Dendritic cell treated with granulocyte-macrophage colony-stimulating factor and Interleukin-4, amounts not matched to agents 40 ng/mL and 50 ng/mL, for 4 days (primary cell): ENCODE measurements at regions of chr4 and their contacts with region 1.

Region 1: DNA sequence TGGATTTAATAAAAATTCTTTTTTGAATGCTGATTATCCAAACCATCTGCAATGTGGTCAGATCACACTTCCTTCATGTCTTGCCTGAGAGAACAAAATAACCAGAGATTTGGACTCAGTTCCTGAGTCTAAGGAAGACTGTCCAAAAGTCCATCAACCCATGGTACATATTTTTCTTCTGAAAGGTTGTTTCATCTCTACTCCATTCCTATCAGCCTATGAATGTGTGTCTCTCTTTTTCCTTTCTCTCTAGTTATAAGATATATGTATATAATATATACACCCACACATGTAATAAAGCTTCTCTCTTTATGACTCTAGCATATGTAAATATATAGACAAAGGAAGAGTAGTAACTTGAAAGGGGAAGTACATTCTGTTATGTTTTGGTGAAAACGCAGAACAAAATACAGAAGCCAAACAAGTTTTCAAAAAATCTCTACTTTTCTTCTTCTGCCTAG is 226.9 kb downstream of the ARHGAP24 start:
- H3K4me3 Mint-ChIP-seq: no peak overlapping the region
- H3K27ac Mint-ChIP-seq: peak overlapping the region; percentile 60
- H3K4me1 Mint-ChIP-seq: peaks cover 53% of the 10 kb centered on the region
- H3K27me3 Mint-ChIP-seq: no peaks in the 10 kb centered on the region

Region 2: GRCh38 chr4:85681221-85681657 is 20.7 kb before region 1 on chr4:
- intact Hi-C with region 1: loop called (anchors 2 kb)
- H3K4me3 Mint-ChIP-seq: no peak overlapping the region
- H3K27ac Mint-ChIP-seq: peak overlapping the region; percentile 70
- H3K4me1 Mint-ChIP-seq: peaks cover 26% of the 10 kb centered on the region
- H3K27me3 Mint-ChIP-seq: no peaks in the 10 kb centered on the region

Region 3: GRCh38 chr4:85741921-85742591 is 40.2 kb after region 1 on chr4:
- intact Hi-C with region 1: loop called (anchors 5 kb)
- H3K4me3 Mint-ChIP-seq: no peak overlapping the region
- H3K27ac Mint-ChIP-seq: peak overlapping the region; percentile 80
- H3K4me1 Mint-ChIP-seq: peaks cover 56% of the 10 kb centered on the region
- H3K27me3 Mint-ChIP-seq: no peaks in the 10 kb centered on the region

Region 4: DNA sequence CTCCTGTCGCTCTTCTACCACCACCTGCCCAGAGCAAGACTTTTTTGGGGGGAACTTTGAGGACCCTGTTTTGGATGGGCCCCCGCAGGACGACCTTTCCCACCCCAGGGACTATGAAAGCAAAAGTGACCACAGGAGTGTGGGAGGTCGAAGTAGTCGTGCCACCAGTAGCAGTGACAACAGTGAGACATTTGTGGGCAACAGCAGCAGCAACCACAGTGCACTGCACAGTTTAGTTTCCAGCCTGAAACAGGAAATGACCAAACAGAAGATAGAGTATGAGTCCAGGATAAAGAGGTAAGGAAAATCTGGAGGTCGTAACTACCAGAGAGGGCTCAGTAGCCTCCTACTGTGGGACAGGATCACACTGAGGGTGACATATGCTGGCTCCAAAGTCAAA is 293.5 kb after region 1 on chr4:
- intact Hi-C with region 1: no loop called
- H3K4me3 Mint-ChIP-seq: no peak overlapping the region
- H3K27ac Mint-ChIP-seq: no peak overlapping the region
- H3K4me1 Mint-ChIP-seq: no peaks in the 10 kb centered on the region
- H3K27me3 Mint-ChIP-seq: no peaks in the 10 kb centered on the region

Region 5: DNA sequence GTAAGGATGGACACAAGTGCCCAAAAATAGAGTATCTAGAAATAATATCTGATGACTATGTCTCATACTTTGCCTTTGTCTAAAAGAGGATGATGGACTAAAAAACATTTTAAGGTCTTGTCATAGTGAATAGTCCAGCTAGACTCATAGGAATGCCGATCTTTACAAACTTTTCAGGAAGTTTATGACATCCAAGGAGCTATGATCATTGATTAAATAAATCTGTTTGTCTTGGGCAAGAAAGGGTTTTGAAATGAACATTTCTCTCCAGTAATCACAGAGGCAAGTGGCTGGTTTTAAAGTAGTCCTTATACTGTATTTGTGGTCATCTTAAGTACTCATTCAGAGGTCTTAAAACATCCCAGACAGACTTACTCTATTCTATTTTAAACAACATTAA is 548.1 kb after region 1 on chr4:
- intact Hi-C with region 1: no loop called
- H3K4me3 Mint-ChIP-seq: no peak overlapping the region
- H3K27ac Mint-ChIP-seq: no peak overlapping the region
- H3K4me1 Mint-ChIP-seq: no peaks in the 10 kb centered on the region
- H3K27me3 Mint-ChIP-seq: no peaks in the 10 kb centered on the region